ENCODE measurements at regions of chr13 and their contacts with region 1.

Region 1: DNA sequence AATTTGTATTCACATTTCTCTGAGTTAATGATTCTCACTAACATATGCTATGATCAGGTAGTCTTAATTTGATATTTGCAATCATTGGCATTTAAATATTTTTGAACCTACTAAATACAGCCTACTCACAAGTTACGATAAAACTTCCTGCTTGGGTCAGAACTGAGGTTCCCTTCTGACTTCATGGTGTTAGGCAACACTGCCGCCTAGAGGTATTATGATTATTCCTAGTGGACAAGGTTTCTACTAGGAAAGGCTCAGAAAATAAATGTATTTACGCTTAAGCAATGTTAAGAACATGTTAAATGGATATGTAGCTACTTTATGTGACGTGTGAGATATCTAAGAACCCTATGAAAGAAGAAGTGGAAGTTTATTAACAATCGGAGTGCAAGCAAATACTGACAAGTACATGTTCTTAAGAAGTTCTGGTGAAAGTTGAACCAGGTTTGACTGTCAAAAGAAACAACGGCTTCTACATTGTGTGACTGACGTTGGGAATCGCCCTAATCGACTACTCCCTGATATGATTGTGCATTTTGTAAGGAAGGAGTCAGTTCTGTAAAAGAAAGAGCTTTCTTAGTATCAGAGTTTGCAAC is 1395.8 kb downstream of the SLITRK5 start:
- DNase-seq: peak; percentile 68
- ATAC-seq: peak; percentile 66
- H3K4me3 ChIP-seq: no peak overlapping the region
- H3K27ac ChIP-seq: no peak overlapping the region
- H3K4me1 ChIP-seq: no peaks in the 10 kb centered on the region
- H3K27me3 ChIP-seq: no peaks in the 10 kb centered on the region
- CTCF ChIP-seq: peak; percentile 72

Region 2: GRCh38 chr13:87999791-88000190 is 1067.2 kb before region 1 on chr13:
- CTCF ChIA-PET with region 1: no interaction called
- POLR2A ChIA-PET with region 1: no interaction called
- intact Hi-C with region 1: loop called (anchors 5 kb)
- DNase-seq: no peak
- ATAC-seq: peak; percentile 31; the same call in 1 of the 2 replicates
- H3K4me3 ChIP-seq: no peak overlapping the region
- H3K27ac ChIP-seq: no peak overlapping the region
- H3K4me1 ChIP-seq: no peaks in the 10 kb centered on the region
- H3K27me3 ChIP-seq: no peaks in the 10 kb centered on the region
- CTCF ChIP-seq: no peak